ENCODE measurements at regions of chr7 and their contacts with region 1.

Region 1: DNA sequence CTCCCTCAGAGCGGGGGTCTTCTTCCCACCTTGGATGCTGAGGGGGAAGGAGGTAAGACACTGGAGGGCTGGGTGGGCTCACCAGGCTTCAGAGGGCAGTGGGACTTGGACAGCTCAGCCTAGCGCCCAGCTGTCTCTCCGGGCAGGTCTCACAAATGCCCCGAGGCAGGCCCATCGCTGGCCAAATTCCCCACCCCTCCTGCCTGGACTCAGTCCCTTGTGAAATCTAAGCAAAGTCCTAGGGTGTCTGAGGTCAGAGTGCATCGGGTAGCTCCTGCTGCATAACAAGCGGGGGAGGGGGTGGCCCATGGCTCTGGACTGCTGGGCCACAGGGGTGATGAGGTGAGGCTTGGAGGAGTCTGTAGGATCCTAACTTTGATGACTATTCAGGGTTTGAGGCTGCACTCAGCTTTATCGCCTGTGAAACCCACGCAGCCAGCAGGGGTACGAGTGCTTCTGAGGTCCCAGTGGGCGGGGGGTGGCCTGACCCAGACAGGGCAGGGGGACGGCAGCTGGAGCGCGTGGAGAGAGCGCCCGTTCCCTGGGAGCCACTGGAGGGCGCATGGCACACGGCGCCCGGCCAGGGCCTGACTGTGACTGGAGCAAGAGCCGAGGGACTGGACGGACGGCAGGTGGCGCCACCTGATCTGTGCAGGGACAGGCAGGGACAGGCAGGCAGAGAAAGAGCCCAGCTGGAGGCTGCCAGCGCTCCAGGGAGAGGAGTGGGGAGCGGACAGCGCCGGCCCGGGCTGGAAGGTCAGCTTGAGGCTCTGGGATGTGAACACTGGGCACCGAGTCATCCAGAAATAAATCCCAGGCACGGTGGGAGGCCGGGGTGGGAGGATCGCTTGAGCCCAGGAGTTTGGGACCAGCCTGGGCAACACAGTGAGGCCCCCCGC is 10.0 kb downstream of the CYP2W1 start:
- DNase-seq: peak; percentile 97
- H3K4me3 Mint-ChIP-seq: no peak overlapping the region
- H3K27ac Mint-ChIP-seq: no peak overlapping the region
- H3K4me1 Mint-ChIP-seq: peaks cover 3% of the 10 kb centered on the region
- H3K27me3 Mint-ChIP-seq: no peaks in the 10 kb centered on the region

Region 2: GRCh38 chr7:886626-887487 is 106.1 kb before region 1 on chr7:
- CTCF ChIA-PET with region 1: no interaction called
- intact Hi-C with region 1: no loop called
- DNase-seq: no peak
- H3K4me3 Mint-ChIP-seq: no peak overlapping the region
- H3K27ac Mint-ChIP-seq: no peak overlapping the region
- H3K4me1 Mint-ChIP-seq: peaks cover 13% of the 10 kb centered on the region
- H3K27me3 Mint-ChIP-seq: no peaks in the 10 kb centered on the region

Region 3: DNA sequence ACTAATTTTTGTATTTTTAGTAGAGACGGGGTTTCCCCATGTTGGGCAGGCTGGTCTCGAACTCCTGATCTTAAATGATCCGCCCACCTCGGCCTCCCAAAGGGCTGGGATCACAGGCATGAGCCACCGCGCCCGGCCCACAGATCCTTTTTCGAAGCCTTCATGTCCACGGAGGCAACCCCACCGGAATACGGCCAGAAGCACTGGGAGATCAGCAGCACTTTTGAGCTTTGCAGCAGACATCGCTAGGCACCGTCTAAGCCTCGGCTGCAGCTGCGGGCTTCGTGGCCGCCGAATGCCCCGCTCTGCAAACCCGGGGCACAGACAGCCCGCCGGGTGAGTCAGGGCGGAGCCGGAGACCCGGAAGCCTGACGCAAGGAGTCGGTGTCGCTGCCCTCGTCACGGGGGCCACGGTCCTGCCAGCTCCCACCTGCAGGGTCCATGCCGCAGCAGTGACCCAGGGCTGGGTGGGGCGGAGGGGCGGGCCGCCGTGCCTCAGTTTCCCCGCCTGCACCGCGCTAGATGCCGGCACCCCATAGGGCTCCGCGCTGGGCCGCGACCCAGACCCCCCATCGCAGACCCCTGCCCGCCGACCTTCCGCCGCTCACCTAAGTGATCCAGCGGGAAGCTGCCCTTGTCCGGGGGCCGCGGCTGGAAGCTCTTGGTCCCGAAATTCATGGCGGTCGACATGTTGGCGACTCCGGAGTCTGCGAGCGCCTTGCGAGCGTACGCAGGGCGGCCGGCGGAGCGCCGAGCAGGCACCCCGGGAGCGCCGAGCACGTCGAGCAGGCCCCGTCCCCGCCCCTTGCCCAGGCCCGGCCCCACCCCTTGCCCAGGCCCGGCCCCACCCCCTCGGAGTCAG is 17.9 kb before region 1 on chr7 and contains the start of gene COX19:
- CTCF ChIA-PET with region 1: interaction called, 38 read pairs
- intact Hi-C with region 1: no loop called
- DNase-seq: peak; percentile 91
- H3K4me3 Mint-ChIP-seq: peak within 1 kb of the TSS; percentile 92
- H3K27ac Mint-ChIP-seq: peak within 1 kb of the TSS; percentile 91
- H3K4me1 Mint-ChIP-seq: peaks cover 33% of the 10 kb centered on the region
- H3K27me3 Mint-ChIP-seq: no peaks in the 10 kb centered on the region
- total RNA-seq, gene COX19: 12.6 to 15.2 TPM

Region 4: DNA sequence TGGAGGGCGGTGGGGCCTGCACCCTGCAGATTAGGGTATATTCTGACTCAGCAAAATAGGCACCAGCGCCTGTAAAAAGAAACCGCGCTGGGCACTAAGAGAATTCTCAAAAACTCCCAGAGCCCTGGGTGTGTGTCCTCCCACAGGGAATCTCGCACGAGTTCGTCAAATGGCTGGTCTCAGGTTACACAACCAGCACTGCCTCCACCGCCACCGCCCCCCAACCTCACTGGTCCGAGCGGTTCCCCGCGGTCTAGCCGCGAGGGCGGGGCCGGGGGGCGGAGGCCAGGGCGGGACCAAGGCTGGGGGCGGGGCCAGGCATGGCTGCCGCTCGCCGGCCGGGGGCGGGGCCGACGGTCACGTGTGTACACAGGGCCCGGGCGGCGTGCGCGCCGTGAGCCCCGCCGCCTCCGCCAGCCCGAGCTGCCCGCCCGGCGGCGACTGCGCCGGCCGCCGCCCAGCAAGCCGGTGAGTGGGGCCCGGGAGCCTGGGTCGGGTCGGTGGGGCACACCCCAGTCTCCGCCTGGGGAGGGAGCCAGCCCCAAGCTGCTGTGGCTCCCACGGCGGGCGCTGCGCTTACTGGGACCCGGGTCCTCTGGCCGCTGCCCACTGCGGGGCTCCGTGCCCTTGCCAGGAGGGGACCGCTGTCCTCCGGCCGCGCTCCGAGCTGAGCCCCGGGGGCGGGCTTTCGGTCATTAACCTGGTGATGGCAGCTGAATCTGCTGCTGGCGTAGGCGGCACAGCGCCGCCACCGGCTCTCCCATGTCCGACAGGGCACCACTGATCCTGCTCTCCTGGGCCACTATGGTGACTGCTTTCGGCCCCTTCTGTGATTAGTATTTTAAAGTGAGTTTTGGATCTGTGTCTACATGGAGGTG is 51.5 kb after region 1 on chr7 and contains the start of gene GPR146:
- CTCF ChIA-PET with region 1: interaction called, 44 read pairs
- intact Hi-C with region 1: no loop called
- DNase-seq: peak; percentile 93
- H3K4me3 Mint-ChIP-seq: peak within 1 kb of the TSS; percentile 69
- H3K27ac Mint-ChIP-seq: peak within 1 kb of the TSS; percentile 70
- H3K4me1 Mint-ChIP-seq: peaks cover 57% of the 10 kb centered on the region
- H3K27me3 Mint-ChIP-seq: no peaks in the 10 kb centered on the region
- total RNA-seq, gene GPR146: 0.57 to 0.62 TPM

Region 5: GRCh38 chr7:1059200-1060091 is 66.5 kb after region 1 on chr7:
- CTCF ChIA-PET with region 1: interaction called, 157 read pairs
- intact Hi-C with region 1: no loop called
- DNase-seq: peak; percentile 18
- H3K4me3 Mint-ChIP-seq: no peak overlapping the region
- H3K27ac Mint-ChIP-seq: no peak overlapping the region
- H3K4me1 Mint-ChIP-seq: peaks cover 22% of the 10 kb centered on the region
- H3K27me3 Mint-ChIP-seq: no peaks in the 10 kb centered on the region

Region 6: DNA sequence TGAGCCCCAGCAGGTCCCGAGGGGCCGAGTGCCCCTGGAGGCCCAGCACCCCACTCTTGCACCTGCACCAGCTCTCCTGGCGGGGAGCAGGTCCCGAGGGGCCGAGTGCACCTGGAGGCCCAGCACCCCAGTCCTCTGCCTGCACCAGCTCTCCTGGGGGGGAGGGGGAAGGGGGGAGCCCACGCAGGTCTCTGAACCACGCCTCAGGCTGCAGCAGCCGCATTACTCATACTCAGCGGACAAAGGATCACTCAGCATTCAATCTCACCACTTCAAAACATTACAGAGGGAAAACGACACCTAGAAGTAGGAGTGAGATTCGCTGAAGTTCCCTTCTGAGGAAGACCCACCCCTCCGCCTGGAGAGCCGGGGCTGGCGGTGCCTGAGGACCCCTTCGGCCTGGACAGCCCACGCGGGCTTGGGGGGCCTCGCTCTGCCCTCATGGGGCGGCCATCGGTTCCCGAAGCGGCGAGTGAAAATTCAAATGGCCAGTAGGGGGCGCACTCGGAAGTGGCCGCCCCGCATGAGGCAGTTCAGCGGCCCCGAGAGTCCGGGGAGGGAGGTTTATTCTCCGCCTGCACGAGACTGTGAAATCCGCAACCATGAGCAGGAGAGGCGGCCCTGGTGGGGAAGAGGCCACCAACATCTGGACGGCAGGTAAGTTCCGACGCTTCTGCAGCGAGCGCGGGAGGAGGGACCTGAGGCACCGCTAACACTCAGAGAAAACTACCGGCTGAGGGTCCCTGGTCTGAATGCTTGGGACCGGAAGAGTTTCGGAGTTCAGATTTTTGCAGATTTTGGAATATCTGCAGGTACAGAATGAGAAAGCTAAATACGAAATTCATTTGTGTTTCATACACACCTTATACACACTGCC is 93.9 kb after region 1 on chr7:
- CTCF ChIA-PET with region 1: interaction called, 34 read pairs
- intact Hi-C with region 1: no loop called
- DNase-seq: peak; percentile 80
- H3K4me3 Mint-ChIP-seq: peak overlapping the region; percentile 38
- H3K27ac Mint-ChIP-seq: no peak overlapping the region
- H3K4me1 Mint-ChIP-seq: peaks cover 12% of the 10 kb centered on the region
- H3K27me3 Mint-ChIP-seq: no peaks in the 10 kb centered on the region

Region 7: DNA sequence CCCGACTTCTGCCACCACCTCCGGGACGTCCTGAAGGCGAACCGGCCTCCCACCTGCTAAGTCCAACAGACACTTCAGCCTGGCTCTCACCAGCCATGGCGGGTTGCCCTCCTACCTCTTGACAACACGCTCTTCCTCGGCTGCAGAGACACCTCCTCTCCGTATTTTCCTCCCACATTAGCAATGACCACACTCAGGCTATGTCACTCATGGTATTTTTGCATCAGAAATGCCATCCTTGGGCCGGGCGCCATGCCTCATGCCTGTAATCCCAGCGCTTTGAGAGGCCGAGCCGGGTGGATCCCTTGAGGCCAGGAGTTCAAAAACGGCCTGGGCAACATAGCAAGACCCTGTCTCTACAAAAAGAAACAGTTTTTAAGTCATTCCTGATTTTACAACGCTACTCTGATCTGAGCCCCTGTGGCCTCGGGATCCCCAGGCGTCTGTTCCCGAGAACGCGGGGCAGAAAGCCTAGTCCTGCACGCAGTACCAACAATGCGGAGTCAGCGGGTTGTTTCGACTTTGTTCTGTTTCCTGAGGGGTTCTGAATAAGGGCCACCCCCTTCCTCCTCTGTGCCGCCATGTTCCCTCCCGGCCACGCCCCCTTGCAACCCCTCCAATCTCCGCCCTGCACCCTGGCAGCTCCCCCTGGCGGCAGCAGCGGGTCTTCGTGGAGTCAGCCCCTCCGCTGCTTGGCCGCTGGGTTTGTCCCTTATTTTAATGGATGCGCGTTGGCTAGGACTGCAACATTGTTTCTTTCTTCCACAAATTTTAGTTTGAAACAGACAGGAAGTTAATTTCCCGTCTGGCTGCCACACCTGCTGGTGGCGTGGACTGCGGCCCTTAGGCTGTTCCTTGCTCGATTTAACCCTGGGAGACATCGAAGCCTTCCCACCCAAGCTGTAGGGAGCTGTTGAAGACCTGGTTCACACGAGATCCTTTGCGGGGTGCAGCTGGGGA is 176.7 kb after region 1 on chr7:
- CTCF ChIA-PET with region 1: interaction called, 45 read pairs
- intact Hi-C with region 1: no loop called
- DNase-seq: peak; percentile 99
- H3K4me3 Mint-ChIP-seq: peak overlapping the region; percentile 88
- H3K27ac Mint-ChIP-seq: peak overlapping the region; percentile 92
- H3K4me1 Mint-ChIP-seq: peaks cover 13% of the 10 kb centered on the region
- H3K27me3 Mint-ChIP-seq: no peaks in the 10 kb centered on the region

Region 8: GRCh38 chr7:1555809-1556540 is 563.0 kb after region 1 on chr7 and contains the start of gene TMEM184A:
- CTCF ChIA-PET with region 1: no interaction called
- intact Hi-C with region 1: no loop called
- DNase-seq: peak; percentile 72
- H3K4me3 Mint-ChIP-seq: no peak within 1 kb of the TSS
- H3K27ac Mint-ChIP-seq: no peak within 1 kb of the TSS
- H3K4me1 Mint-ChIP-seq: peaks cover 3% of the 10 kb centered on the region
- H3K27me3 Mint-ChIP-seq: no peaks in the 10 kb centered on the region
- total RNA-seq, gene TMEM184A: 0.36 TPM in 1 of 2 experiments, not detected in the other